Calu3 (cell line): ENCODE measurements at regions of chr1 and their contacts with region 1.

Region 1: GRCh38 chr1:227318003-227318852 is at the start of gene CDC42BPA:
- DNase-seq: peak; percentile 83
- H3K4me3 Mint-ChIP-seq: peak within 1 kb of the TSS; percentile 91
- H3K27ac Mint-ChIP-seq: peak within 1 kb of the TSS; percentile 97
- H3K4me1 Mint-ChIP-seq: peaks cover 53% of the 10 kb centered on the region
- H3K27me3 Mint-ChIP-seq: no peaks in the 10 kb centered on the region
- CTCF ChIP-seq: no peak
- total RNA-seq, gene CDC42BPA: 48.6 and 49.5 TPM in 2 replicates

Region 2: DNA sequence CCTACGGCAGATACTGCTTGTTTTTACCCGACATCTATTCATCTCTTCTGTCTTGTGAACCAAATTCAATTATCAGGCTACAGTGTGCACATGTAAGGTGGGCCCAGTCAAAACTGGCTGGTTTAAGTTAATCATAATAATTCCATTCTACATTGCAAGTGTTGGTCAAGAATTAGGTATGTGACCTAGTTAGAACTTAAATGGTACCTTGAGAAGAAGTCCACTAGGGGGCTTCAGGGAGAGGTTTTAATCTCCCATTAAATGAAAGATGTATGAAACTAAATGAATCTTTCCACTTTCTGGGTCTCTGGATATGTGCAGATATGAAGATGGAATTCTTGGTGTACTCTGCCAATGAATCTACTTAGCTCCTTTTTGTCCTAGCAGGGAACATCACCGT is 187.0 kb before region 1 on chr1:
- CTCF ChIA-PET with region 1: no interaction called
- intact Hi-C with region 1: loop called (anchors 10 kb)
- DNase-seq: no peak
- H3K4me3 Mint-ChIP-seq: no peak overlapping the region
- H3K27ac Mint-ChIP-seq: no peak overlapping the region
- H3K4me1 Mint-ChIP-seq: peaks cover 6% of the 10 kb centered on the region
- H3K27me3 Mint-ChIP-seq: no peaks in the 10 kb centered on the region
- CTCF ChIP-seq: peak; percentile 30

Region 3: DNA sequence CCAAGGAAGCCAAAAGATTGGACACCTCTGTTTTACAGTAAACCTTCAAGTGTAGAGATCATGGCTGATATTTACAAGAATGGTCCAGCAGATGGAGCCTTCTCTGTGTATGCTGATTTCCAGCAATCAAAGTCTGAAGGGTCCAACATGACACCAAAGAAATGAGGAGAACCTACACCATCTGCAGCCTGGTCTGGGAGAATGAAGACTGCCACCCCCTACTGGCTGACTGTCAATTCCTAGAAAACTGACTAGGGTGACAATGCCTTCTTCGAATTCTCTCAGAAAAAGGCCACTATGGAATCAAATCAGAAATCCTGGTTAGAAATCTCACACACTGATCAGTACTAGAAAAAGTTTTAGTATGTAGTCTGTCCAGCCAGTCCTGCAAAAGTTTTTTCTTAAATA is 83.2 kb before region 1 on chr1:
- CTCF ChIA-PET with region 1: no interaction called
- intact Hi-C with region 1: loop called (anchors 2 kb)
- DNase-seq: peak; percentile 70
- H3K4me3 Mint-ChIP-seq: no peak overlapping the region
- H3K27ac Mint-ChIP-seq: no peak overlapping the region
- H3K4me1 Mint-ChIP-seq: peaks cover 8% of the 10 kb centered on the region
- H3K27me3 Mint-ChIP-seq: no peaks in the 10 kb centered on the region
- CTCF ChIP-seq: peak; percentile 69

Region 4: GRCh38 chr1:227280836-227281235 is 37.4 kb before region 1 on chr1:
- CTCF ChIA-PET with region 1: no interaction called
- intact Hi-C with region 1: no loop called
- DNase-seq: no peak
- H3K4me3 Mint-ChIP-seq: no peak overlapping the region
- H3K27ac Mint-ChIP-seq: no peak overlapping the region
- H3K4me1 Mint-ChIP-seq: no peaks in the 10 kb centered on the region
- H3K27me3 Mint-ChIP-seq: no peaks in the 10 kb centered on the region
- CTCF ChIP-seq: no peak

Region 5: DNA sequence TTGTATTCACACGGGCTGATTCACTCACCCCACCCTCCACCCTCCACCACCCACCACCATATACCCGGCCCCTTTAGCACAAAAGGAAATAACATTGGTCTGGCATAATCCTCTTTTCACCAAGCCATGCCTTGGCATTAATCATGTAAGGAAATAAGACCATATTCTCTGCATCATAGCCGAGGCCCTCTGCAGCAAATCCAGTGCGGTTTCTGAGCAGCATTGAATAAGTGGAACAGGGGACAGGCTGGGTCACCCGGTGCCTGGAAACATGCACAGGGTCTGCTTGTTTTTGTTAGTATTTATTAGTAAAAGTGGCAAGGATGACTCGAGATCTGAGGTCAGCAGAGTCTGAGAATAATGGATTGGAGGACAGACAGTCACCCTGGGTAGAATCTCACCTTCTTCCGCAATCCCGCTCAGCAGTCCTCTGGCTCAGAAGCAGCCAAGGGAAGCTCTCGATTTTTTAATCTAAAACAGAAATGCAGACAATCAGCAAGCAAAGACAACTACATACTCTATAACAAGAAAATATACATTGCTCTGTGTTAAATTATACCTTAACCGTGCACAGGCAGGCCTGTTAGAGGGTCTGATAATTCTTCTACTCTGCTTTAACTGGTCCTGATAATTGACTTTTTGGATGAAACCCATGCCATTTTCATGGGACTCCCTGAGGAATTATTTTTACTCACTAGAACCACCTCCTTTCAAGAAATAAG is 52.5 kb after region 1 on chr1:
- CTCF ChIA-PET with region 1: interaction called, 6 read pairs
- intact Hi-C with region 1: loop called (anchors 2 kb)
- DNase-seq: no peak
- H3K4me3 Mint-ChIP-seq: peak overlapping the region; percentile 1
- H3K27ac Mint-ChIP-seq: peak overlapping the region; percentile 17
- H3K4me1 Mint-ChIP-seq: peaks cover 24% of the 10 kb centered on the region
- H3K27me3 Mint-ChIP-seq: no peaks in the 10 kb centered on the region
- CTCF ChIP-seq: no peak

Region 6: GRCh38 chr1:227428803-227429202 is 110.6 kb after region 1 on chr1:
- CTCF ChIA-PET with region 1: interaction called, 3 read pairs
- intact Hi-C with region 1: loop called (anchors 1 kb)
- DNase-seq: peak; percentile 83
- H3K4me3 Mint-ChIP-seq: peak overlapping the region; percentile 2
- H3K27ac Mint-ChIP-seq: peak overlapping the region; percentile 56
- H3K4me1 Mint-ChIP-seq: peaks cover 57% of the 10 kb centered on the region
- H3K27me3 Mint-ChIP-seq: no peaks in the 10 kb centered on the region
- CTCF ChIP-seq: no peak